ENCODE measurements at regions of chr17 and their contacts with region 1.

Region 1: DNA sequence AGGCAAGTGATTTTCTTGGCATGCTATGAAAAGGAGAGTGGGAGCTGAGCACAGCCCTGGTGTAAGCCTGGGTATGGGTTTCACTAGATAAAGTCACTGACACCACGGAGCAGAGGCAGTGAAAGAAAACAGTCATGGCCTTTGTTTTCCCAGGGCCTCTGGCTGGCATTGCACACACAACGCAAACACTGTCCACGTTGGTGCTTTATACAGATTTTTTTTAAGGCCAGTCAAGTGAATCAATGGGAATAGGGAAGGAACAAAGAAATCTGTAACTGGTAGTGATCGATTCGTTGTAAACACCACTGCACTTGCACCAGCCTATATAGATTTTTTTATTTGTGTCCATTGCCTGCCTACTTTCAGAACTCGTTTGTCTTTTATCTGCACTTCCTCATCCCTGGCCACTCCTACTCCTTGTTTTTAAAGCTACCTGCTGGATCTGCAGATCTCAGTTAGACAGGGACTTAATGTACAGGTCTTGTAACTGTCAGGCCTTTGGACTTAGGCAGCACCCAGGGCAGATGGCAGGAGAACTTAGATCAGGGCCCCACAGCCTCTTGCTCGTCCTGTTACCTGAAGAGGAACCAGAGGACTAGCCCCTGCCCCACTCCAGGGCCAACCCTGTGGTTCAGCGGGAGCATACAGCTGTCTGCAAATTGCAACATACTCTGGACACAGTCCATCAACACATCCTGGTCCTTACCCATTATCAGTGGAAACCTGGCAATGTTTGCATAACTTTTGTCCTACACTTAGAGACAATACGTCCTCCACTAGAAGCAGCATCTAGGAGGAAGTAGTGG is 10.6 kb upstream of the TMIGD1 start:
- DNase-seq: peak; percentile 43 to 70 (median 69)
- ATAC-seq: peak; percentile 88 to 89
- H3K4me3 ChIP-seq: no peak overlapping the region
- H3K27ac ChIP-seq: peak overlapping the region; percentile 71
- H3K4me1 ChIP-seq: peaks cover 12% of the 10 kb centered on the region
- H3K27me3 ChIP-seq: no peaks in the 10 kb centered on the region

Region 2: DNA sequence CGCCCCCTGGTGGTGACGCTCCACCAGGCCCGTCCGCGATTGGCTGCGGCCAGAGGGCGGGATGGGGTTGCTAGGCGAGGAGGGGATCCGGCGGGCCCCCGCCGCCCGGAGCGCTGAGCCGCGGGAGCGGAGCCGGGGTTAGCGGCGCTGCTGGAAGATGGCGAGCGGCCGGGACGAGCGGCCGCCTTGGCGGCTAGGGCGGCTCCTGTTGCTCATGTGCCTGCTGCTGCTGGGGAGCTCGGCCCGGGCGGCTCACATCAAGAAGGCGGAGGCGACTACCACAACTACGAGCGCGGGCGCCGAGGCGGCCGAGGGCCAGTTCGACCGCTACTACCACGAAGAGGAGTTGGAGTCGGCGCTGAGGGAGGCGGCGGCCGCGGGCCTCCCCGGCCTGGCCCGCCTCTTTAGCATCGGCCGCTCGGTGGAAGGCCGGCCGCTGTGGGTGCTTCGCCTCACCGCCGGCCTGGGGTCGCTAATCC is 34.4 kb after region 1 on chr17 and contains the start of gene CPD:
- intact Hi-C with region 1: loop called in 1 of 4 experiments (anchors 5 kb)
- DNase-seq: peak; percentile 97 to 99 (median 99)
- ATAC-seq: peak; percentile 99
- H3K4me3 ChIP-seq: peak within 1 kb of the TSS; percentile 77
- H3K27ac ChIP-seq: peak within 1 kb of the TSS; percentile 59
- H3K4me1 ChIP-seq: peaks cover 2% of the 10 kb centered on the region
- H3K27me3 ChIP-seq: no peaks in the 10 kb centered on the region
- total RNA-seq, gene CPD: 21.8 to 37.1 (median 32.4) TPM

Region 3: GRCh38 chr17:30600830-30601494 is 256.5 kb after region 1 on chr17:
- intact Hi-C with region 1: no loop called
- DNase-seq: peak in 1 of 3 donors; percentile 66
- ATAC-seq: peak; percentile 7 to 19
- H3K4me3 ChIP-seq: peak overlapping the region; percentile 92
- H3K27ac ChIP-seq: peak overlapping the region; percentile 86
- H3K4me1 ChIP-seq: no peaks in the 10 kb centered on the region
- H3K27me3 ChIP-seq: no peaks in the 10 kb centered on the region